Heart right ventricle (tissue), 16 donors: ENCODE measurements at regions of chr16 and their contacts with region 1.

Region 1: DNA sequence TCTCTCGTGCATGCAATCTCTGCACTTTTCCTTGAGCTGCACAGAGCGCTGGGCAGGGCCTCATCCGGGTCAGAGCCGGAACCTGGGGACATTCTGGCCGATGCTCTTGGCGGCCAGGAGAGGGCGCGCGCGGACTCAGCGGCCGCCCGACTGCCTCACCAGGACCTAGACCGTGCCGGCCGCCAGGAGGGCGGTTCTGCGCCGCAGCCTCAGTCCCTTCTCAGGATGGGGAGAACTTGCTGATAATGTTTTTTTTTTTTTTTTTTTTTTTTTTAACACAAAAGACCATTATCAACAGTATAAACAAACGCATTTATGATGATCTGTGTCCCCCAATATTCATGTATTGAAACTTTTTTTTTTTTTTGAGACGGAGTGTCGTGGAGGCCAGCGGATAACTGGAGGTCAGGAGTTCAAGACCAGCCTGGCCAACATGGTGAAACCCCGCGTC is 8.1 kb upstream of the FLYWCH2 start:
- DNase-seq: peak; percentile 75 to 83
- ATAC-seq: peak; percentile 97 to 99 (median 98)
- H3K4me3 ChIP-seq: no peak overlapping the region
- H3K27ac ChIP-seq: no peak overlapping the region
- H3K4me1 ChIP-seq: peaks cover 0 to 10% (median 0%) of the 10 kb centered on the region in 9 donors
- H3K27me3 ChIP-seq: no peaks in the 10 kb centered on the region
- CTCF ChIP-seq: peak; percentile 91 to 96 (median 94)

Region 2: DNA sequence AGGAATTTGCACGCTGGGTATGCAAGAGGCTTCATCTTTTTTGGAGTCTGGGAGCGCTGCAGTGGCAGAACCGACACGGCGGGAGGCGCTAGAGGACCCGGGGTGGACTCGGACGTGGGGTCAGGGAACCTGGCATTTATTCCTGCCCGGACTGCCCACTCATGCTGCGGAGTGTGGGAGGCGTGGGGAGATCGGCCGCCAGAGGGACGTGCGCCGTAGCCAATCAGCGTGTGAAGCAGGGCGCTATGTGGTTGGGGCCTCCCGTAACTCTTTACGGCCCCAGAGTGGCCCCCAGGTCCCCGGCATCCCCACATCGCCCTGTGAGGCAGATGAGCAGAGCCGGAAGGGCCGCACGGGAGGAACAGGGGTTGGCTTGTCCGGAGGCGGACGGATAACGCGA is 19.3 kb after region 1 on chr16:
- intact Hi-C with region 1: no loop called
- DNase-seq: no peak
- ATAC-seq: no peak
- H3K4me3 ChIP-seq: no peak overlapping the region
- H3K27ac ChIP-seq: no peak overlapping the region
- H3K4me1 ChIP-seq: peaks cover 3 to 22% (median 15%) of the 10 kb centered on the region in 9 donors
- H3K27me3 ChIP-seq: no peaks in the 10 kb centered on the region
- CTCF ChIP-seq: no peak

Region 3: DNA sequence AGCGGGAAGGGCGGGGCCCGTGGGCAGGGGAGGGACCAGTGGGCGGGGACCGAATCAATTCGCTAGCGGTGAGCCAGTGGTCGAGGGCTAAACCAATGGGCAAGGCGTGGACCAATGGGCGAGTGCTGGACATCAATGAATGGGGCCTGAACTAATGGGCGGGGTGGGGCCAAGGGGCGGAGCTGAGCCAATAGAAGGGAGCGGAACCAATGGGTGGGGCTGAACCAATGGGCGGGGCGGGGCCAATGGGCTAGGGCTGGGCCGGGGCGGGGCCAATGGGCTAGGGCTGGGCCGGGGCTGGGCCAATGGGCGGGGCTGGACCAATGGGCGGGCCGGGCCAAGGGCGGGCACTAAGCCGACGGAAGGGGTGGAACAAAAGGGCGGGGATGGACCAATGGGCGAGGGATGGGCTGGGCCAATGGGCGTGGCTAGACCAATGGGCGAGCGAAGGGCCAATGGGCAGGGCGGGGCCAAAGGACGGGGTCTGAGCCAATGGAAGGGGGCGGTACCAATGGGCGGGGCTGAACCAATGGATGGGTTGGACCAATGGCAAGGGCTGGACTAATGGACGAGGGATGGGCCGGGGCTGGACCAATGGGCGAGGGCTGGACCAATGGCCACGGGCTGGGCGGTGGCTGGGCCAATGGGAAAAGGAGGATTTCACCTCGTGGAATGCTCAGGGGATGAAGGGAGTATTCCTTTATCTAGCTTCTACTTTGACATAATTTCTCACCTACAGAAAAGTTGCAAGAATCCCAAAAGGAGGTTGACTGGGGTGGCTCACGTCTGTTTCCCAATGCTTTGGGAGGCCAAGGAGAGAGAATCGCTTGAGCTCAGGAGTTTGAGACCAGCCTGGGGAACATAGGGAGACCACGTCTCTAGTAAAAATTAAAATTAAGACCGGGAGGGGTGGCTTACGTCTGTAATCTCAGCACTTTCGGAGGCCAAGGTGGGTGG is 30.8 kb after region 1 on chr16:
- intact Hi-C with region 1: loop called in 2 of 10 experiments (anchors 2 to 5 kb)
- DNase-seq: peak; percentile 99
- ATAC-seq: peak; percentile 85 to 94 (median 90)
- H3K4me3 ChIP-seq: peak overlapping the region in 9 of 10 donors; percentile 83 to 98 (median 90)
- H3K27ac ChIP-seq: peak overlapping the region; percentile 93 to 99 (median 97)
- H3K4me1 ChIP-seq: peaks cover 3 to 22% (median 15%) of the 10 kb centered on the region in 9 donors
- H3K27me3 ChIP-seq: no peaks in the 10 kb centered on the region
- CTCF ChIP-seq: no peak

Region 4: GRCh38 chr16:2911580-2912329 is 36.8 kb after region 1 on chr16 and contains the start of gene FLYWCH1:
- intact Hi-C with region 1: loop called in 2 of 10 experiments (anchors 5 kb)
- DNase-seq: peak; percentile 98 to 99
- ATAC-seq: peak; percentile 96 to 98 (median 97)
- H3K4me3 ChIP-seq: peak within 1 kb of the TSS; percentile 71 to 97 (median 87)
- H3K27ac ChIP-seq: peak within 1 kb of the TSS; percentile 71 to 97 (median 91)
- H3K4me1 ChIP-seq: peaks cover 0 to 30% (median 17%) of the 10 kb centered on the region in 9 donors
- H3K27me3 ChIP-seq: no peaks in the 10 kb centered on the region
- CTCF ChIP-seq: peak in 1 of 9 donors; percentile 9
- total RNA-seq, gene FLYWCH1: 27.1 to 42.3 (median 32.8) TPM

Region 5: DNA sequence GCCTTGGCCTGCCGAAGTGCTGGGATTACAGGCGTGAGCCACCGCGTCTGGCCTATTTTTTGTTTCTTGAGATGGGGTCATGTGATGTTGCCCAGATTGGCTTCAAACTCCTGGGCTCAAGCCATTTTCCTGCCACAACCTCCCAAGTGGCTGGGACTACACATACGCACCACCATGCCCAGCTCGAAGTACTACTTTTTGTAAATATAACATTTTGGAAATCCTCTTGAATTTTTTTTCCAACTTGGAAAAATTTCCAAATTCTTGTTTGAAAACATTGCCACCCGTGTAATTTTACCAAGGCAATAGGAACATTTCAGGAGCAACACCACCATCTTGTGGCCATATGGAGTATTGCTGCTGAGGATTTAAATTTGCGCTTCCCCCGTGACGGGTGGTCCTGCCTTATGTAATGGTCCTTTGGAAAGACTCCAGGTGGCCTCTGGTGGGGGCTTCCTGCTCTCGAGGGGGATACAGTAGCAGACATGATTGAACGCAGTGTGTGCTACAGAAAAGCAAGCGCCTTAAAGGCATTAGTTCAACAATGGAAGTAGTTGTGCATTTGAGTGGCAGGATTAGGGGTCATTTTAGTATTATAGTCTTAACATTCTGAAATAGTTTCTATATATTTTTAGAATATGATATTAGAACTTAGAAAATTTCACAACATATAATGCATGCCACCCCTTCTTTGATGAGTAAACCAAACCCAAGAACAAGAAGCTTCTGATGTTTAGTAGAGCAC is 44.7 kb after region 1 on chr16:
- intact Hi-C with region 1: loop called in 6 of 10 experiments (anchors 2 to 5 kb)
- DNase-seq: peak in 1 of 2 donors; percentile 63
- ATAC-seq: peak in 7 of 8 donors; percentile 48 to 81 (median 61)
- H3K4me3 ChIP-seq: no peak overlapping the region
- H3K27ac ChIP-seq: peak overlapping the region in 7 of 10 donors; percentile 1 to 37 (median 27)
- H3K4me1 ChIP-seq: peaks cover 0 to 16% (median 6%) of the 10 kb centered on the region in 9 donors
- H3K27me3 ChIP-seq: no peaks in the 10 kb centered on the region
- CTCF ChIP-seq: peak; percentile 81 to 93 (median 89)

Region 6: DNA sequence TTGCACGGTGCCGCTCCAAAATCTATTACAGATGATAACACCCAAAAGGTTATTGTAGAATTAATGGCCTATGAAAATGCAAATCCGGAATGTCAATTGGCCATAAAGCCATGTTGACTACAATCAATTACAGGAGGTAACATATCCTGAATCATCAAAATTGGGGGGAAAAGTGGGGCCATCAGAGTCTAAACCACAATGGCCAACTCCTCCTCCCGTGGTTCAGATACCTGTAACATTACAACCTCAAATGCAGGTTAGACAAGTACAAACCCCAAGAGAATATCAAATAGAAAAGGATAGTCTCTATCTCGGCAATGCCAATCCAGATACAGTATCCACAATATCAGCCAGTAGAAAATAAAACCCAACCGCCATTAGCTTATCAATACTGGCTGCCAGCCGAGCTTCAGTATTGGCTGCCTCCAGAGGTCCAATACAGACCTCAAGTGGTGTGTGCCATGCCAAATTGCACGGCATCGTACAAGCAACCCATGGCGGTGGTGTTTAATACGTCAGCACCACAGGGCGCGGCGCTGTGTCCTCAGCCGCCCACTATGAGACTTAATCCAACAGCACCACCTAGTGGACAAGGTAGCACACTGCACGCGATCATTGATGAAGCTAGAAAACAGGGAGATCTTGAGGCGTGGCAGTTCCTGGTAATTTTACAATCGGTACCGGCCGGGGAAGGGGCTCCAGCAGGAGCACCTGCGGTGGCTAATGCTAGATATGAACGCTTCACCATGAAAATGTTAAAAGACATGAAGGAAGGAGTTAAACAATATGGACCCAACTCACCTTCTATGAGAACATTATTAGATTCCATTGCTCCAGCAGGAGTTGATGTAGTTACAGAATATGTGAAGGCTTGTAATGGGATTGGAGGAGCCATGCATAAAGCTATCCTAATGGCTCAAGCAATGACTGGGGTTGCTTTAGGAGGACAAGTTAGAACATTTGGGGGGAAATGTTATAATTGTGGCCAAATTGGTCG is 52.0 kb after region 1 on chr16:
- intact Hi-C with region 1: loop called in 1 of 10 experiments (anchors 5 kb)
- DNase-seq: peak; percentile 82 to 84
- ATAC-seq: peak; percentile 80 to 93 (median 89)
- H3K4me3 ChIP-seq: peak overlapping the region in 6 of 10 donors; percentile 22 to 33 (median 30)
- H3K27ac ChIP-seq: no peak overlapping the region
- H3K4me1 ChIP-seq: peaks cover 0 to 11% (median 9%) of the 10 kb centered on the region in 9 donors
- H3K27me3 ChIP-seq: no peaks in the 10 kb centered on the region
- CTCF ChIP-seq: peak; percentile 93 to 99 (median 95)